Panc1 (cell line): ENCODE measurements at regions of chr7 and their contacts with region 1.

Region 1: DNA sequence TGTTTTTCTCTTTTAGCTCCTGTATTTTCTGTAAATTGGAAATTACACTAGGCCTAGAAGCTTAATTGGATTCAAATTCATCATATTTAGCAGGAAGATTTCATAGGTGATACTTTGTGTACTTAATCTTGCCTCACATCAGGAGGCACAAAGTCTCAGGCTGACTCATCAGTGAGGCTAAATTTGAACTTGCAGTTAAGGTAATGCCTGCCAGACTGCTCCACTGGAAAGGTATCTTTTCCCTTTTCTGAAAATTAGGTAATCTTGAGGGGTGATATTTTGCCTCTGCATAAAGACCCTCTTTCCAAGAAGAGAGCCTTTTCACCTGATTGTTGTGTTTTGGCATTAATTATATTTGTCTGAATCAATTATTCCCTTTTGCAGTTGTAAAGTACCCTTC is 14.6 kb downstream of the PPIA start:
- DNase-seq: no peak
- ATAC-seq: no peak
- H3K4me3 ChIP-seq: no peak overlapping the region
- H3K27ac ChIP-seq: no peak overlapping the region
- H3K4me1 ChIP-seq: peaks cover 8% of the 10 kb centered on the region
- H3K27me3 ChIP-seq: no peaks in the 10 kb centered on the region
- CTCF ChIP-seq: no peak

Region 2: GRCh38 chr7:44497155-44498018 is 313.7 kb before region 1 on chr7:
- CTCF ChIA-PET with region 1: no interaction called
- POLR2A ChIA-PET with region 1: interaction called, 12 read pairs
- in situ Hi-C with region 1: no loop called
- intact Hi-C with region 1: no loop called
- DNase-seq: no peak
- ATAC-seq: peak; percentile 38; the same call in 1 of the 2 replicates
- H3K4me3 ChIP-seq: no peak overlapping the region
- H3K27ac ChIP-seq: no peak overlapping the region
- H3K4me1 ChIP-seq: no peaks in the 10 kb centered on the region
- H3K27me3 ChIP-seq: no peaks in the 10 kb centered on the region; the same call in 1 of the 2 replicates
- CTCF ChIP-seq: no peak

Region 3: DNA sequence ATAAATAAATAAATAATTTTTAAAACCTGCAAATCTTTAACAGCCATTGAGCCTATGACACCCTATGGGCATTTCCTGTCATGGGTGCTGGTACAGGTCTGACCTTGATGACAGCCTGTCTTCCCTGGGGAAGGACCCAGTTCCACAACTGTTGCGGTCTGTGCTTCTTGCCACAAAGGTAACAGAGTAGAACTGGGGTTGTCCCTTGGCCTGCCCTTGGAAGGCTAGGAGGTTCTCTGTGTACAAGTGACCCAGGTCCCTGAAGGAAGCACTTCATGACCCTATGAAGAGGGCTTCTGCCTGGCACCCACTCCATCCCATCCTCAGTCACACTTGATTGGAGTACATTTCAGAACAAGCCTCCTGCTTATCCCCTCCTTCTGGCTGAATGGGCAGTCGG is 137.8 kb before region 1 on chr7:
- CTCF ChIA-PET with region 1: no interaction called
- POLR2A ChIA-PET with region 1: no interaction called
- in situ Hi-C with region 1: no loop called
- intact Hi-C with region 1: no loop called
- DNase-seq: no peak
- ATAC-seq: no peak
- H3K4me3 ChIP-seq: no peak overlapping the region
- H3K27ac ChIP-seq: no peak overlapping the region
- H3K4me1 ChIP-seq: no peaks in the 10 kb centered on the region
- H3K27me3 ChIP-seq: no peaks in the 10 kb centered on the region
- CTCF ChIP-seq: no peak

Region 4: DNA sequence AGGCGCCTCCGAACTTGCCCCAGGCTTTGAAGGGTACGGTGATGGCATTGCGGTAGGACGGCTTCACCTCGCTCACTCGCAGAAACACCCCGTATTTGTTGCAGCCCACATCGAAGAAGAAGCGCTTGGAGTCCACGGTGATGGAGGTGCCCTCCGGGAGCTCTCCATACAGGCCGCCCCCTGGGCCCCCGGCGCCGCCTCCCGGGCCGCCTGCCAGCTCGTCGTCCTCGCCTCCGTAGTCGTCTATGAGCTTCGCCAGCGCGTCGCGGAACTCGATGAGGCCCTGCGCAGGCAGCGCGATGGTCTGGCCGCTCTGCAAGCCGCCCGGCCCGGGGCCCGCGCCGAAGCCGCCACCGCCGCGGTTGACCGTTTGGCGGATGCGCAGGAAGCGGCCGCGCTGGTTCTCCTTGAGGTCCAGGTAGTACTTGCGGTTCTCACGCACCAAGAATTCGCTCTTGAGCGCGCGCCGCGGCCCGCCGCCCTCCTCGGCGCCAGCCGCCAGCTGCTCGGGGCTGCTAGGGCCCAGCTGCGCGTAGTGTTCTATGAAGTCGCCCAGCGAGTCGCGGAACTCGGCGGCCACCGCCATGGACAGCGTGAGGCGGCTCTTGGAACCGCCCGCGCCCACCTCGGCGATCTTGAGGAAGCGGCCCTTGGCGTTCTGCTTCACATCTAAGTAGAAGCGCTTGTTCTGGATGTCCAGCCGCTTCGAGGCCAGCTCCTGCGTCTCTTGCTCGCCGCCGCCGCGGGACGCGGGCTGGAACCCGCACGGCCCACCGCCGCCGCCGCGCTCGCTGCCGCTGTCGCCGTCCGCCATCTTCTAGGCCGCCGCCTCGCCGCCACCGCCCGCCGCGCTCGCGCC is 73.7 kb after region 1 on chr7:
- CTCF ChIA-PET with region 1: no interaction called
- POLR2A ChIA-PET with region 1: interaction called, 10 read pairs
- in situ Hi-C with region 1: no loop called
- intact Hi-C with region 1: no loop called
- DNase-seq: no peak
- ATAC-seq: peak; percentile 64
- H3K4me3 ChIP-seq: peak overlapping the region; percentile 81 to 83
- H3K27ac ChIP-seq: peak overlapping the region; percentile 83
- H3K4me1 ChIP-seq: peaks cover 42% of the 10 kb centered on the region
- H3K27me3 ChIP-seq: no peaks in the 10 kb centered on the region
- CTCF ChIP-seq: no peak